ENCODE measurements at regions of chr22 and their contacts with region 1.

Region 1: GRCh38 chr22:29387921-29388758 is at the start of gene AP1B1:
- DNase-seq: peak; percentile 92
- ATAC-seq: peak; percentile 80
- H3K4me3 Mint-ChIP-seq: peak within 1 kb of the TSS; percentile 93
- H3K27ac Mint-ChIP-seq: peak within 1 kb of the TSS; percentile 93
- H3K4me1 Mint-ChIP-seq: peaks cover 61% of the 10 kb centered on the region
- H3K27me3 Mint-ChIP-seq: no peaks in the 10 kb centered on the region
- CTCF ChIP-seq: no peak
- total RNA-seq, gene AP1B1: 120 and 132 TPM in 2 replicates

Region 2: GRCh38 chr22:29267858-29268417 is 120.2 kb before region 1 on chr22 and contains the starts of genes EWSR1 and RHBDD3:
- CTCF ChIA-PET with region 1: no interaction called
- POLR2A ChIA-PET with region 1: interaction called, 6 read pairs
- intact Hi-C with region 1: loop called (anchors 1 kb)
- DNase-seq: peak; percentile 99
- ATAC-seq: peak; percentile 86
- H3K4me3 Mint-ChIP-seq: peak within 1 kb of the TSS; percentile 96
- H3K27ac Mint-ChIP-seq: peak within 1 kb of the TSS; percentile 100
- H3K4me1 Mint-ChIP-seq: peaks cover 58% of the 10 kb centered on the region
- H3K27me3 Mint-ChIP-seq: no peaks in the 10 kb centered on the region
- CTCF ChIP-seq: no peak
- total RNA-seq, gene EWSR1: 347 and 382 TPM in 2 replicates
- total RNA-seq, gene RHBDD3: 17.7 and 17.9 TPM in 2 replicates

Region 3: GRCh38 chr22:29370537-29370936 is 17.6 kb before region 1 on chr22:
- CTCF ChIA-PET with region 1: interaction called, 4 read pairs
- POLR2A ChIA-PET with region 1: interaction called, 15 read pairs
- intact Hi-C with region 1: loop called (anchors 1 kb)
- DNase-seq: no peak
- ATAC-seq: peak; percentile 47
- H3K4me3 Mint-ChIP-seq: no peak overlapping the region
- H3K27ac Mint-ChIP-seq: peak overlapping the region; percentile 18
- H3K4me1 Mint-ChIP-seq: peaks cover 77% of the 10 kb centered on the region
- H3K27me3 Mint-ChIP-seq: no peaks in the 10 kb centered on the region
- CTCF ChIP-seq: no peak

Region 4: GRCh38 chr22:29408945-29409344 is 20.8 kb after region 1 on chr22:
- CTCF ChIA-PET with region 1: no interaction called
- POLR2A ChIA-PET with region 1: interaction called, 3 read pairs
- intact Hi-C with region 1: loop called (anchors 2 kb)
- DNase-seq: no peak
- ATAC-seq: no peak
- H3K4me3 Mint-ChIP-seq: no peak overlapping the region
- H3K27ac Mint-ChIP-seq: no peak overlapping the region
- H3K4me1 Mint-ChIP-seq: peaks cover 29% of the 10 kb centered on the region
- H3K27me3 Mint-ChIP-seq: peaks cover 4% of the 10 kb centered on the region
- CTCF ChIP-seq: no peak

Region 5: DNA sequence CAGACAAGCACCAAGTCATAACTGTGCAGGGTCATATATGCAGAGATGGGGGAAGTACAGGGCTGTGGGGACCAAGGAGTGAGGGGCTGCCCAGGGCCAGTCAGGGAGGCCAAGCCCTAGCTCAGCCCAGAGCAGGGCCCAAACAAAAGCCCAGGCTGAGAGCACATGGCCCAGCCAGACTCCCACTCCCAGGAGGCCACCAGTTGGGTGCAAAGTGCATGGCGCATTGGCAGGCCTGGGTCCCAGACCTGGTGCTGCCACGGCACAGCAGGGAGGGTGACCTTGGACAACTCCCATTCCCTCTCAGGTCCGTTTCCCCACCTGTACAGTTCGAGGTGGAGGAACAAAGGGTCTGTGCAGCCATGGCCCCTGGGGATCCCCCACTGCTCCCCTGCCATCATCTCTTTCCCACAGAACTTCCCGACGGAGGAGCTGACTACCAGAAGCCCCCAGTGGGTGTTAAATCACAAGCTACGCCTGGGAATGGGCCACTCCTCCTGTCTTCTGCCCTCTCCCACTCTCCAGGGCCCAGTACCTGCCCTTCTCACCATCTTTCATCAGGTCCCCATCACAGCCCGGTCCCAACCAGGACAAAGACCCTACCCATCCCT is 192.2 kb after region 1 on chr22:
- CTCF ChIA-PET with region 1: no interaction called
- POLR2A ChIA-PET with region 1: no interaction called
- intact Hi-C with region 1: loop called (anchors 1 kb)
- DNase-seq: no peak
- ATAC-seq: no peak
- H3K4me3 Mint-ChIP-seq: peak overlapping the region; percentile 92
- H3K27ac Mint-ChIP-seq: peak overlapping the region; percentile 86
- H3K4me1 Mint-ChIP-seq: peaks cover 18% of the 10 kb centered on the region
- H3K27me3 Mint-ChIP-seq: no peaks in the 10 kb centered on the region
- CTCF ChIP-seq: no peak

Region 6: GRCh38 chr22:29596408-29596807 is 208.3 kb after region 1 on chr22:
- CTCF ChIA-PET with region 1: no interaction called
- POLR2A ChIA-PET with region 1: no interaction called
- intact Hi-C with region 1: no loop called
- DNase-seq: no peak
- ATAC-seq: no peak
- H3K4me3 Mint-ChIP-seq: no peak overlapping the region
- H3K27ac Mint-ChIP-seq: no peak overlapping the region
- H3K4me1 Mint-ChIP-seq: no peaks in the 10 kb centered on the region
- H3K27me3 Mint-ChIP-seq: no peaks in the 10 kb centered on the region
- CTCF ChIP-seq: no peak

Region 7: GRCh38 chr22:29766632-29767170 is 378.6 kb after region 1 on chr22 and contains the start of gene ZMAT5:
- CTCF ChIA-PET with region 1: no interaction called
- POLR2A ChIA-PET with region 1: no interaction called
- intact Hi-C with region 1: loop called (anchors 1 kb)
- DNase-seq: peak; percentile 76
- ATAC-seq: peak; percentile 96
- H3K4me3 Mint-ChIP-seq: peak within 1 kb of the TSS; percentile 97
- H3K27ac Mint-ChIP-seq: peak within 1 kb of the TSS; percentile 93
- H3K4me1 Mint-ChIP-seq: peaks cover 32% of the 10 kb centered on the region
- H3K27me3 Mint-ChIP-seq: no peaks in the 10 kb centered on the region
- CTCF ChIP-seq: no peak
- total RNA-seq, gene ZMAT5: 19.2 and 22.6 TPM in 2 replicates